CD4-positive, alpha-beta memory T cell (primary cell): ENCODE measurements at regions of chr16 and their contacts with region 1.

Region 1: DNA sequence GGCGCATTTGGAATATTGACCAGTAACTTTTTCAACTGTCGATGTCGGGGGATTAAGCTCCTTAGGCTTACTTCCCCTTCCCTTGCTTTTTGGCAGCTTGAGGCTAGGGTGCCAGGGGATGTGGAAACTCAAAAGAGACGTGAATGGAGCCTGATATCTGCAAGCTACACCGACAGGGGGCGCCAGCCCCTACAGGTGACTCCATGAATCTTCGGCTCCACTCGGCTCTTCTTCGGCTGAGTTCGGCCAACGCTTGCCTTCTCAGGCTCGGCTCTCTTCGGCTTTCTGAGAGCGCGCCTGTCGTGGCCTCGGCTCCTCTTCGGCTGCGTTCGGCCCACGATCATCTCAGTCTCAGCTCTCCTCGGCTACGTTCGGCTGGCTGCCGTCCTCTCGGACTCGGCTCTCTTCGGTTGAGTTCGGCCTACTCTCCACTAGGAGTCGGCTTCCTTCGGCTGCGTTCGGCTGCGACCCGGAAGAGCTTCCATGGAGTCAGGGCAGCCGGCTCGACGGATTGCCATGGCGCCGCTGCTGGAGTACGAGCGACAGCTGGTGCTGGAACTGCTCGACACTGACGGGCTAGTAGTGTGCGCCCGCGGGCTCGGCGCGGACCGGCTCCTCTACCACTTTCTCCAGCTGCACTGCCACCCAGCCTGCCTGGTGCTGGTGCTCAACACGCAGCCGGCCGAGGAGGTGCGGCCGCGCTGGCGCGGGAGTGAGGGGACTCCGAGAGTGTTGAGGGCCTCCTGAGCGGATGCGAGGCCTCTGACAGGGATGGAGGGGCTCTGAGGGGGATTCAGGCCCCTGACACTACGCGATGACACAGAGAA is at the start of gene ERCC4:
- DNase-seq: peak; percentile 99 to 100 (median 100)
- H3K4me3 ChIP-seq: peak within 1 kb of the TSS; percentile 87 to 90
- H3K4me3 Mint-ChIP-seq: peak within 1 kb of the TSS; percentile 83 to 94 (median 90)
- H3K27ac ChIP-seq: peak within 1 kb of the TSS; percentile 90
- H3K27ac Mint-ChIP-seq: peak within 1 kb of the TSS; percentile 70 to 96 (median 91)
- H3K4me1 ChIP-seq: peaks cover 16% of the 10 kb centered on the region
- H3K4me1 Mint-ChIP-seq: peaks cover 15 to 29% (median 22%) of the 10 kb centered on the region in 4 donors
- H3K27me3 ChIP-seq: no peaks in the 10 kb centered on the region
- H3K27me3 Mint-ChIP-seq: no peaks in the 10 kb centered on the region
- total RNA-seq, gene ERCC4: 11.5 to 15.3 TPM

Region 2: GRCh38 chr16:13621639-13622038 is 298.3 kb before region 1 on chr16:
- CTCF ChIA-PET with region 1: no interaction called
- POLR2A ChIA-PET with region 1: no interaction called
- intact Hi-C with region 1: no loop called
- DNase-seq: no peak
- H3K4me3 ChIP-seq: no peak overlapping the region
- H3K4me3 Mint-ChIP-seq: no peak overlapping the region
- H3K27ac ChIP-seq: no peak overlapping the region
- H3K27ac Mint-ChIP-seq: no peak overlapping the region
- H3K4me1 ChIP-seq: no peaks in the 10 kb centered on the region
- H3K4me1 Mint-ChIP-seq: no peaks in the 10 kb centered on the region
- H3K27me3 ChIP-seq: no peaks in the 10 kb centered on the region
- H3K27me3 Mint-ChIP-seq: peaks cover 1 to 4% of the 10 kb centered on the region in 2 donors

Region 3: GRCh38 chr16:13935408-13935807 is 15.5 kb after region 1 on chr16:
- CTCF ChIA-PET with region 1: interaction called, 15 read pairs
- POLR2A ChIA-PET with region 1: no interaction called
- intact Hi-C with region 1: no loop called
- DNase-seq: peak in 1 of 5 donors; percentile 14
- H3K4me3 ChIP-seq: no peak overlapping the region
- H3K4me3 Mint-ChIP-seq: no peak overlapping the region
- H3K27ac ChIP-seq: no peak overlapping the region
- H3K27ac Mint-ChIP-seq: no peak overlapping the region
- H3K4me1 ChIP-seq: no peaks in the 10 kb centered on the region
- H3K4me1 Mint-ChIP-seq: peaks cover 0 to 4% (median 2%) of the 10 kb centered on the region in 4 donors
- H3K27me3 ChIP-seq: no peaks in the 10 kb centered on the region
- H3K27me3 Mint-ChIP-seq: no peaks in the 10 kb centered on the region

Region 4: DNA sequence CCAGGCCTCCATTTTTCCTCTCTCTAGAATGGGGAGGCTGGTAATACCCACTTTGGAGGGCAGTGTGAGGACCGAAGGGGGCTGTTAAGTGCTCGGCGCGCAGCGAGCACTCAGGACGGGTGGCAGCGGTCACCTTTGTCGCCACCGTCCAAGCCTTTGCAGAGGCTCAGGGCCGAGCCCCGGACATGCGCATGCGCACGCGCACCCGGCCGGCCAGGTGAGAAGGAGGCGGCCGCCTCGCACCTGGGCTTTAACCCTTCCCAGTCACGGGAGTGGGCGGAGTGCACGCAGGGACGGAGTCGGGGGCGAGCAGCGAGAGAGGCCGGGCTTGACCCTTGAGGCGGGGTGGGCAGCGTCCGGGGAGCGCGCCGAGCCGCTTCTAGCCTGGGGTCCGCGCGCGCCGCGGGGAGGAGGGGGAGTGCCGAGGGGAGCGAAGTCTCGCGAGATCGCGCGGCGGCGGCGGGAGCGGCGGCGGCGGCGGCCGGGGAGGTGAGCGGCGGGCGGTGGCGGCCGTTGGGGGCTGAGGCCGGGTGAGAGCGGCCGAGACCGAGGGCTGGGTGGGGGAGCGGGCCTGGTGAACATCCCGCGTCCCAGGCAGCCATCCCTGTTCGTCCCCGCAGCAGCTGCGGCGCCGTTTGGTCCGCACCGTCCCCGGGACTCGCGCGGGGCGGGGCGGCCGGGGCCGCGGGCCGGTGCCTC is 151.1 kb after region 1 on chr16 and contains the start of gene MRTFB:
- CTCF ChIA-PET with region 1: interaction called, 5 read pairs
- POLR2A ChIA-PET with region 1: no interaction called
- intact Hi-C with region 1: loop called (anchors 1 kb)
- DNase-seq: peak; percentile 74 to 88 (median 84)
- H3K4me3 ChIP-seq: peak within 1 kb of the TSS; percentile 59 to 84
- H3K4me3 Mint-ChIP-seq: peak within 1 kb of the TSS; percentile 88 to 92 (median 89)
- H3K27ac ChIP-seq: peak within 1 kb of the TSS; percentile 69
- H3K27ac Mint-ChIP-seq: peak within 1 kb of the TSS; percentile 81 to 91 (median 88)
- H3K4me1 ChIP-seq: peaks cover 13% of the 10 kb centered on the region
- H3K4me1 Mint-ChIP-seq: peaks cover 8 to 24% (median 17%) of the 10 kb centered on the region in 4 donors
- H3K27me3 ChIP-seq: no peaks in the 10 kb centered on the region
- H3K27me3 Mint-ChIP-seq: peaks cover 0 to 4% of the 10 kb centered on the region in 2 donors
- total RNA-seq, gene MRTFB: 24.7 to 26.7 TPM

Region 5: DNA sequence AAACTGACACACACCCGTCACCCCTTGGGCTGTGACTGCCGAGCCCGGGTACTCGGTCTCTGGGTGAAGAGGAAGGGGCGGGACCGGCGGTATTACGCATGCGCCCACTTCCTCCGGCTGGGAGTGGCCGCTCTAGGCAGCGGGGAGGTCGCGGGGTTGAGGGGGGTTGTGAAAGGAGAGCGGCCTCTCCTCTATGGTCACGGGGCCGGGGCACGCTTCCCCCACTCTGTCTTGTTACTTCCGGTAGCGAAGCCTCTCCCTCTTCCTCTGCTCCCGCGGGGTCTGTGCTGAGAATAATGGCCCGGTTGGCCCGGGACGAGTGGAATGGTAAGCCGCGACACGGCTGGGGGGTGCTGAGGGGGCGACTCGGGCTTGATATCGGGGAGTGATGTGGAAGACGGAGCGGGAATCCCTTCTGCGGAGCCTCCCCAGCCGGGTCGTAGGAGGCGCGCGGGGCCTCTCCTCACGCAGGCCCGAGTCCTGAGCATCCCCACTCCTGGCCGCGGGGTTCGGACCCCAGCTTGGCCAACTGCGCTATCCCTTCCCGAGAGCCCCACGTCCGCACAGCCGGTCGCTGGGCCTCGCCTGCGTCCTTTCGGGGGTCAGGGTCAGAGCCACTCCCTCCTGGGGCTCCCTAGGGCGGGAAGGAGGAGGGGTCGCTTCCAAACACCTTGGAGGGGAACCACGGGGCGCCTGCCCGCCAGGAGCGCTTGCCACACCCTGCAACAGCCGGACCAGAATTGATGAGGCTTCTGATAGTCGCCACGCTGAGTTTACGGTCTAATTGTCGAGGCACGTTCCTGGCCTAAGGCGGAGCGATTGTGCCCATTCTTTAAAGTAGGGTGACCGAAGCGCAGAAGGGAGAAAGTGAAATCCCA is 713.0 kb after region 1 on chr16 and contains the start of gene BFAR:
- CTCF ChIA-PET with region 1: interaction called, 3 read pairs
- POLR2A ChIA-PET with region 1: interaction called, 9 read pairs
- intact Hi-C with region 1: loop called (anchors 10 kb)
- DNase-seq: peak; percentile 99
- H3K4me3 ChIP-seq: peak within 1 kb of the TSS; percentile 85 to 93
- H3K4me3 Mint-ChIP-seq: peak within 1 kb of the TSS; percentile 99 to 100 (median 100)
- H3K27ac ChIP-seq: peak within 1 kb of the TSS; percentile 83
- H3K27ac Mint-ChIP-seq: peak within 1 kb of the TSS; percentile 87 to 100 (median 99)
- H3K4me1 ChIP-seq: peaks cover 63% of the 10 kb centered on the region
- H3K4me1 Mint-ChIP-seq: peaks cover 37 to 79% (median 62%) of the 10 kb centered on the region in 4 donors
- H3K27me3 ChIP-seq: no peaks in the 10 kb centered on the region
- H3K27me3 Mint-ChIP-seq: no peaks in the 10 kb centered on the region
- total RNA-seq, gene BFAR: 71.9 to 79.6 TPM